ENCODE measurements at regions of chr12 and their contacts with region 1.

Region 1: GRCh38 chr12:75334384-75335030 is at the start of gene GLIPR1L1:
- DNase-seq: peak; percentile 84 to 90 (median 87)
- ATAC-seq: peak; percentile 81 to 89 (median 87)
- H3K4me3 ChIP-seq: peak within 1 kb of the TSS in 11 of 12 donors; percentile 17 to 59 (median 47)
- H3K27ac ChIP-seq: peak within 1 kb of the TSS in 3 of 12 donors; percentile 10 to 29 (median 24)
- H3K4me1 ChIP-seq: peaks cover 0 to 14% (median 5%) of the 10 kb centered on the region in 12 donors
- H3K27me3 ChIP-seq: no peaks in the 10 kb centered on the region
- CTCF ChIP-seq: peak; percentile 78 to 98 (median 90)
- POLR2A ChIP-seq: no peak
- total RNA-seq, gene GLIPR1L1: not detected

Region 2: GRCh38 chr12:75452675-75453330 is 118.3 kb after region 1 on chr12:
- intact Hi-C with region 1: no loop called
- DNase-seq: no peak
- ATAC-seq: no peak
- H3K4me3 ChIP-seq: no peak overlapping the region
- H3K27ac ChIP-seq: no peak overlapping the region
- H3K4me1 ChIP-seq: peaks cover 0 to 26% (median 0%) of the 10 kb centered on the region in 12 donors
- H3K27me3 ChIP-seq: no peaks in the 10 kb centered on the region
- CTCF ChIP-seq: no peak
- POLR2A ChIP-seq: no peak

Region 3: GRCh38 chr12:75480469-75480949 is 146.0 kb after region 1 on chr12 and contains the start of gene GLIPR1:
- intact Hi-C with region 1: loop called in 2 of 10 experiments (anchors 5 kb)
- DNase-seq: peak; percentile 48 to 81 (median 71)
- ATAC-seq: peak; percentile 58 to 95 (median 91)
- H3K4me3 ChIP-seq: peak within 1 kb of the TSS; percentile 9 to 68 (median 45)
- H3K27ac ChIP-seq: peak within 1 kb of the TSS in 11 of 12 donors; percentile 2 to 98 (median 45)
- H3K4me1 ChIP-seq: peaks cover 0 to 69% (median 0%) of the 10 kb centered on the region in 12 donors
- H3K27me3 ChIP-seq: no peaks in the 10 kb centered on the region
- CTCF ChIP-seq: no peak
- POLR2A ChIP-seq: no peak
- total RNA-seq, gene GLIPR1: 3.2 to 58.6 (median 7.4) TPM

Region 4: DNA sequence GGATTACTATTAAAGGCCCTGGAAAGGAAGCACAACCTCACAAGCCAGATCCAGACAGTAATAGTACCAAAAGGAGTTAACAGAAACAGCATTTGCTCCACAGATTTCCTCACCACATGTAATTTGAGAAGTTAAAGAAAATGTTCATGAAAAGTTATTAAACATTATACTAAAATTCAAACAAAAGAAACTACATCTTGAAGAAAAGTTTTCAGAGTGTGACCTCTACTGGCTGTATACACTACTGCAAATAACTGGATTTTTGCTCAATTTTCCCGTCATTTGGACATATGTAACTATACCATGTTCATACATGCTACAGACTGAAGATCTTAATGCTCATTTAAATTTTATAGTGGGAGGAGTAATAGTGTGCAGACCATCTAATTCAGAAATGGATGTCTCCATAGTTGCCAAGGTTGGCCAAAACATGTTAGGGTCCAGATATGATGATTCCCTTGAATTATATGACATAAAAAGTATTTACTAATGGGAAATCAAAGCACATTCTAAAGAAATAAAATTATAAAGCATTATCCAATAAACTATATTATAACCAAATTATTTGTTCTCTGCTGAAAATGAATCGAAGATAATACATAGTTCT is 171.3 kb after region 1 on chr12:
- intact Hi-C with region 1: loop called in 7 of 10 experiments (anchors 2 to 10 kb)
- DNase-seq: no peak
- ATAC-seq: no peak
- H3K4me3 ChIP-seq: no peak overlapping the region
- H3K27ac ChIP-seq: no peak overlapping the region
- H3K4me1 ChIP-seq: peaks cover 0 to 33% (median 12%) of the 10 kb centered on the region in 12 donors
- H3K27me3 ChIP-seq: no peaks in the 10 kb centered on the region
- CTCF ChIP-seq: peak; percentile 21 to 66 (median 49)
- POLR2A ChIP-seq: no peak

Region 5: GRCh38 chr12:75623631-75624118 is 289.2 kb after region 1 on chr12:
- intact Hi-C with region 1: no loop called
- DNase-seq: peak in 1 of 5 donors; percentile 27
- ATAC-seq: peak; percentile 88 to 95 (median 94)
- H3K4me3 ChIP-seq: no peak overlapping the region
- H3K27ac ChIP-seq: peak overlapping the region in 3 of 12 donors; percentile 21 to 45 (median 36)
- H3K4me1 ChIP-seq: peaks cover 0 to 10% (median 0%) of the 10 kb centered on the region in 12 donors
- H3K27me3 ChIP-seq: no peaks in the 10 kb centered on the region
- CTCF ChIP-seq: peak in 10 of 12 donors; percentile 5 to 50 (median 38)
- POLR2A ChIP-seq: no peak